Activated naive CD4-positive, alpha-beta T cell treated with anti-CD3 and anti-CD28 coated beads for 36 hours (primary cell): ENCODE measurements at regions of chr1 and their contacts with region 1.

Region 1: GRCh38 chr1:222643938-222644635 is 26.2 kb downstream of the MIA3 start:
- DNase-seq: peak; percentile 99
- H3K4me3 Mint-ChIP-seq: peak overlapping the region; percentile 99
- H3K27ac Mint-ChIP-seq: peak overlapping the region; percentile 92
- H3K4me1 Mint-ChIP-seq: peaks cover 32% of the 10 kb centered on the region
- H3K27me3 Mint-ChIP-seq: no peaks in the 10 kb centered on the region

Region 2: GRCh38 chr1:222617367-222617951 is 26.6 kb before region 1 on chr1:
- CTCF ChIA-PET with region 1: no interaction called
- intact Hi-C with region 1: loop called (anchors 1 kb)
- DNase-seq: peak; percentile 92
- H3K4me3 Mint-ChIP-seq: peak overlapping the region; percentile 79
- H3K27ac Mint-ChIP-seq: peak overlapping the region; percentile 54
- H3K4me1 Mint-ChIP-seq: peaks cover 32% of the 10 kb centered on the region
- H3K27me3 Mint-ChIP-seq: peaks cover 3% of the 10 kb centered on the region

Region 3: DNA sequence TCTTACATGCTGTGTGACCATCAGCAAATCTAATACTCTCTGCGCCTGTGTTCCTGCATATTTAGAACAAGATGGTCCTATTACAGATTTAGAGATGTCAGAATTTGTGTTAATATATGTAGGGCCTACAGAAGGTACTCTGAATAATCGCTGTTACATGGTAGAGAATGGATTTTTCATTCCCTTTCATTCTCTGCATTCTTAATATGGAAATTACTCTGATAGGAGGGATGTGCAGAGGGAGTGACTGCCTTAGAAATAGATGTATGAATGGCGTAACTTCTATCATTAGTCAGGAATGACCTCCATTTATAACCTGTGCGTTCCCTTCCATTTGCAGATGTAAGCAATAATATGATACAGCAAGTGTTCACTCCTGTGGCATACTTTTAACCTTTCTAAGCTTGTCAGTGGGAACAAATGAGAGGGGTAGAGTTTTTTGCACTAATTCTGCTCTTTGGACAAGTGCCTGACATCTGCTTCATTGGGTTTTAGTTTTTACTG is 19.4 kb after region 1 on chr1:
- CTCF ChIA-PET with region 1: no interaction called
- intact Hi-C with region 1: no loop called
- DNase-seq: no peak
- H3K4me3 Mint-ChIP-seq: no peak overlapping the region
- H3K27ac Mint-ChIP-seq: no peak overlapping the region
- H3K4me1 Mint-ChIP-seq: peaks cover 14% of the 10 kb centered on the region
- H3K27me3 Mint-ChIP-seq: no peaks in the 10 kb centered on the region